ENCODE measurements at regions of chr2 and their contacts with region 1.

Region 1: DNA sequence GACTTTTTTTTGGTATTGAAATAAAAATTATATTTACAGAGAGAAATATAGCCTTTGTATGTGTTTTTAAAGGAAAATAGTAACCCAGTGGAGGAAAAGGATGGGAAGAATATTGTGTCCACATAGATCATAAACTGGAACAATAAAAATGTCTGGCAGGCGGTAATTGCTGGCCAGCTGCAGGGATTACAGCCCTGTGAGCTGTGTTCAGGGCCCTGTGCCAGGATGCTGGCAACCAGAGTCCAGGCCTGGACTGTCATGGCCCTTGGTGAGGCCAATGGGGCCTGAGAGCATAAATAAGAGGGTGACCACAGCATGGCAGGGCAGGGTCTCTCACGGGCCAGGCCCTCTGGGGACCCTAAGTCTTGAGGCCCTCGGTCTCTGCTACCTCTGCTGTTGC is 171.2 kb downstream of the ACOXL start:
- DNase-seq: no peak
- H3K4me3 ChIP-seq: no peak overlapping the region
- H3K27ac ChIP-seq: no peak overlapping the region
- H3K4me1 ChIP-seq: no peaks in the 10 kb centered on the region
- H3K27me3 ChIP-seq: no peaks in the 10 kb centered on the region
- CTCF ChIP-seq: no peak

Region 2: DNA sequence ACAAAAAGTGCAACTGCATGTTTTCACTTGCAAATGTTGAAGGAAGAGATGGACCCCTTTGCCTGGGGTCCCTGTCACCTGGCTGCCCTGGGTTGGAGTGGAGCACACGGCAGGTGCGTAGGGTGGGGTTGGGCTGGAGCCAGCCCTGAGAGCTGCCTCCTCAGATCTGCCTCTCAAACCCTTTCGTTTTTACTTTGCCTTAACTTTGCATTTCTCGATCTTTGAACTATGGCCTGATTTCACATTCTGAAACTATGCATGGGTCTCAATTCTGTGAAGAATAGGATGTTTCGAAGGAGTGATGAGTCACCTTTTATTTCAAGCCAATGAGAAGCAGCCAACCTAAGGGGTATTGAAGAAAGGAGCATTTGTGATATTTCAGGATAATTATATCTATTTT is 38.4 kb before region 1 on chr2:
- CTCF ChIA-PET with region 1: no interaction called
- dilution Hi-C with region 1: loop called (anchors 5 kb)
- in situ Hi-C with region 1: no loop called
- intact Hi-C with region 1: no loop called
- DNase-seq: no peak
- H3K4me3 ChIP-seq: no peak overlapping the region
- H3K27ac ChIP-seq: no peak overlapping the region
- H3K4me1 ChIP-seq: peaks cover 6% of the 10 kb centered on the region
- H3K27me3 ChIP-seq: no peaks in the 10 kb centered on the region
- CTCF ChIP-seq: no peak

Region 3: GRCh38 chr2:110991911-110992310 is 88.4 kb after region 1 on chr2:
- CTCF ChIA-PET with region 1: no interaction called
- dilution Hi-C with region 1: no loop called
- in situ Hi-C with region 1: no loop called
- intact Hi-C with region 1: no loop called
- DNase-seq: no peak
- H3K4me3 ChIP-seq: no peak overlapping the region
- H3K27ac ChIP-seq: no peak overlapping the region
- H3K4me1 ChIP-seq: peaks cover 5% of the 10 kb centered on the region
- H3K27me3 ChIP-seq: peaks cover 4% of the 10 kb centered on the region
- CTCF ChIP-seq: no peak